A673 (cell line): ENCODE measurements at regions of chr5 and their contacts with region 1.

Region 1: DNA sequence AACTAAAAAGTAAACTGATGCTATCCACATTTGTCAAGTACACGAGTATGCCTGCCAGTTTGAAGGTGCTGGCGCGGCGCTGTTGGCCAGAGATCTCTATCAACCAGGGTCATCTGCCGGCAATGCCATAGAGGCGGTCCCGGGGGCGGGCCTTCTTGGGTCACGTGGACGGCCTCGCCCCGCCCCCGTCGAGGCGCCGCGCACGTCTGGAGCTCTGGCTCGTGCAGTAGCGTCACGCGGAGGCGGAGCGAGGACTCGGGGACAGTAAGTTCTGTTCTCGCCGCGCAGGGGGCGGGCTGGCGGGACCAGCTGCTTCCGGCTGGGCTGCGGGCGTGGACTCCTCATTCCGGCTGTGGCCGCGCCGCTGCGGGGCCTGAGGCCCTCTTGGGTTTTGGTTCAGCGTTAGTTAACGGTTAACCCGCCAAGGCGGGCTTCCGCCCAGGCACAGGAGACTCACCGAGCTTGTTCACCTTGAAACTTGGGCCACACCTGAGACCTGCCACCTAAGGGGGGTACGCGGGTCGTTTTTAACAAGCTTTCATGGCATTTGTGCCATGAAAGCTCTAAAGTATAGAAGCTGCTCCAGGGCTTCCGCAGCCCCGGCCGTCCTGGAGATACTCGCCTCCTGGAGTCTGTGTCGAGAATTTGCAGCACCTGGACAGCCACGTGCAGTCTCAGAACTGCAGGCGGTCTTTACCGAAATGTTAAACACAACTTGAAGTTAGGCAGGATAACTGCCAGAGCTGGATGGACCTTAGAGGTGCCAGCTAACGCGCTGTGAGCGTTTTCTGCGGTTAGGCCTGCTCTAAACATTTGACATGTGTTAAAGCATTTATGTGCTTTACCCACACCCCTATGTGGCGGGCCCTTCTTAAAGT is at the start of gene RFESD:
- DNase-seq: peak; percentile 98
- H3K4me3 ChIP-seq: peak within 1 kb of the TSS; percentile 50
- H3K27ac ChIP-seq: peak within 1 kb of the TSS; percentile 74
- H3K4me1 ChIP-seq: no peaks in the 10 kb centered on the region
- H3K27me3 ChIP-seq: no peaks in the 10 kb centered on the region
- CTCF ChIP-seq: no peak
- total RNA-seq, gene RFESD: 2.4 and 3.5 TPM in 2 replicates

Region 2: GRCh38 chr5:95283761-95284415 is 362.9 kb before region 1 on chr5:
- CTCF ChIA-PET with region 1: no interaction called
- POLR2A ChIA-PET with region 1: no interaction called
- intact Hi-C with region 1: loop called (anchors 10 kb)
- DNase-seq: peak; percentile 52
- H3K4me3 ChIP-seq: peak overlapping the region; percentile 62
- H3K27ac ChIP-seq: no peak overlapping the region
- H3K4me1 ChIP-seq: no peaks in the 10 kb centered on the region
- H3K27me3 ChIP-seq: peaks cover 84% of the 10 kb centered on the region
- CTCF ChIP-seq: peak; percentile 68

Region 3: DNA sequence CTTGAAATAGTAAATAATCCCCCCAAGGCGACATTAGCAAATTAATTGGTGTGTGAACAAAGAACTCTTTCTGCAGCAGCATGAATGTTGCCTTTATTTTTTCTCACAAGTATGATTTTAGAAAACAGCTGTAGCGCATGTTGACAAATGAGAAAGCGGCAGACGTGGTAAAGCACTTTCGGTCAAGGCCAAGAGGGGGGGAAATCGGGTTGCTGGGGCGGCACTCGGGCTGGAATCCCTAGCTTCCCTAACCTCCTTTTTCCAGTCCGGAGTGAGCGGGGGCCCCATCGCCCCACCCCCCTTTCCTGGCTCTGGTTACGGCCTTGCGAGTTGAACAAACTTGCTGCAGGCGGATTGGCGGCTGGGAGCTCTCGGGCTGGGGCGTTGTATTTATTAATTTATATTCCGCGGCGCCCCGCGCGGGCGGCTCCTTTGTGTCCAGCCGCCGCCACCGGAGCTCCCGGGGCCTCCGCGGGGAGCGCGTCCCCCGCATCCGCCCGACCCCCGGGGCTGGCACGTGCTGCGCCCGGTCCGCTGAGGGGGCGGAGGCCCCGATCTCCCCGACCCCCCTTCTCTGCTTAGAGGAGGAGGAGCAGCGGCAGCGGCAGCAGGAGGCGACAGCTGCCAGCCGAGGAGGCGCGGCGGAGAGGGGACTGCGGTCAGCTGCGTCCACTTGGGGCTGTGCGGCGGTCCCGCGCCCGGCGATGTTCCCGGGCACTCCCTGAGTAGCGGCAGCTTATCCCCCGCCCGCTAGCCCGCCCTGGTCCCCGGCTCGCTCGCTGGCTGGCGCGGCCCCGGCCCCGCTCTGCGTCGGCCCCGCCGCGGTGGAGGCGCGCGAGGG is 84.2 kb after region 1 on chr5 and contains the start of gene RHOBTB3:
- CTCF ChIA-PET with region 1: no interaction called
- POLR2A ChIA-PET with region 1: no interaction called
- intact Hi-C with region 1: loop called (anchors 5 kb)
- DNase-seq: peak; percentile 81
- H3K4me3 ChIP-seq: peak within 1 kb of the TSS; percentile 81
- H3K27ac ChIP-seq: peak within 1 kb of the TSS; percentile 82
- H3K4me1 ChIP-seq: peaks cover 7% of the 10 kb centered on the region
- H3K27me3 ChIP-seq: no peaks in the 10 kb centered on the region
- CTCF ChIP-seq: no peak
- total RNA-seq, gene RHOBTB3: 29.6 and 40.5 TPM in 2 replicates

Region 4: GRCh38 chr5:95781101-95781583 is 134.3 kb after region 1 on chr5:
- CTCF ChIA-PET with region 1: interaction called, 3 read pairs
- POLR2A ChIA-PET with region 1: no interaction called
- intact Hi-C with region 1: loop called (anchors 5 kb)
- DNase-seq: peak; percentile 84
- H3K4me3 ChIP-seq: no peak overlapping the region
- H3K27ac ChIP-seq: no peak overlapping the region
- H3K4me1 ChIP-seq: no peaks in the 10 kb centered on the region
- H3K27me3 ChIP-seq: no peaks in the 10 kb centered on the region
- CTCF ChIP-seq: peak; percentile 97

Region 5: DNA sequence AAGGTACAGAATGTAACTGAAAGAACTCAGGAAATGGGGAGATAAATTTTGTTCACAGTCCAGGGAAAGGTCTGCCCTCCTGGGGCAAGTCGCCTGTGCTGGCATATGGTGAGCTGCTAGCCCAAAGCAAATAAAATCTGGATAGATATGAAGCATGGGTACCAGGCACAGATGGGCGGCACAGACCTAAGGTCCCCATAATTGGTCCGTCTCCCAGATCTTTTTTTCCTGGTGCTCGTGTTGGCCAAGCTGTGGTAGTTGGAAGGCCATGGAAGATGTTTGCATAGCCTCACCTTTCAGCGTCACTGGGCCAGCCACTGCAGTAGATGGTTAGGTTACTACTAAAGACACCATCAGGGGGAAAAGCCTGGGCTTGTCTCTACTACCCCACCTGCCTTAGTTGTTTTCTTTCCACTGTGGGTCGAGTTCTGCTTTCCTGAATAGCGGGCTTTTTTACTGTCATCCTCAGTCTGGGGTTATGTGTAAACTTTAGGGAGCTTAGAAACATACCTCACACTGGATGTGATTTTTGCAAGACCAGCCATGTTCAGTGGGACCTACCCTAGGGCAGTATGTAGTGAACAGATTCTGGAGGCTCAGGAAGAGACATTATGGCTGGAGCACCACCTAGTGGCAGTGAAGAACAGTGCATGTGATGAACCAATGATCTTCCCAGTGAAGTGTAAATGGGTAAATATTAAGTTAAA is 199.9 kb after region 1 on chr5:
- CTCF ChIA-PET with region 1: no interaction called
- POLR2A ChIA-PET with region 1: no interaction called
- intact Hi-C with region 1: loop called (anchors 1 kb)
- DNase-seq: peak; percentile 78
- H3K4me3 ChIP-seq: no peak overlapping the region
- H3K27ac ChIP-seq: no peak overlapping the region
- H3K4me1 ChIP-seq: no peaks in the 10 kb centered on the region
- H3K27me3 ChIP-seq: no peaks in the 10 kb centered on the region
- CTCF ChIP-seq: peak; percentile 92

Region 6: GRCh38 chr5:96336351-96336985 is 689.7 kb after region 1 on chr5:
- CTCF ChIA-PET with region 1: interaction called, 3 read pairs
- POLR2A ChIA-PET with region 1: no interaction called
- intact Hi-C with region 1: loop called (anchors 5 kb)
- DNase-seq: peak; percentile 84
- H3K4me3 ChIP-seq: no peak overlapping the region
- H3K27ac ChIP-seq: no peak overlapping the region
- H3K4me1 ChIP-seq: no peaks in the 10 kb centered on the region
- H3K27me3 ChIP-seq: no peaks in the 10 kb centered on the region
- CTCF ChIP-seq: peak; percentile 93

Region 7: DNA sequence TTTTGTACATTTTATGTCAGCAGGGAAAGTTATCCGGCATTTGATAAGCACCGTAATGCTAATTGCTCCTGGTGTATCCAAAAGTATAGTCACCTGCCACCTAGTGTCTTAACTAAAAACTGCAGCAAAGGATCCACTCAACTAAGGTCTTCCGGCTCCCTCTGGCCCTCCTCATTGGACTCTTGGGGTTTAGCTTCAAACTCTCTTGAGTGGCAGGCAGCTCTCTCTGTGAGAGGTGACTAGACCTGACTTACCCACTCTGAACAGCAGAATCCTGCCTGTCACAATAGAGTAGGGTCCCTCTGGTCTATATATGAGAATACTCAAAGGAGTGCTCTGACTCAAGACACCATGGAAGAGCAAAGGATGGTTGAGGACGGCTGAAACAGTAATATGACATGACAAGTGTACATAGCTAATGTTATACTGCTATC is 955.0 kb after region 1 on chr5:
- CTCF ChIA-PET with region 1: no interaction called
- POLR2A ChIA-PET with region 1: no interaction called
- intact Hi-C with region 1: loop called (anchors 10 kb)
- DNase-seq: peak; percentile 85
- H3K4me3 ChIP-seq: no peak overlapping the region
- H3K27ac ChIP-seq: no peak overlapping the region
- H3K4me1 ChIP-seq: peaks cover 6% of the 10 kb centered on the region
- H3K27me3 ChIP-seq: no peaks in the 10 kb centered on the region
- CTCF ChIP-seq: peak; percentile 83